IMR-90 (cell line): ENCODE measurements at regions of chr20 and their contacts with region 1.

Region 1: GRCh38 chr20:35269055-35269781 is 8.7 kb downstream of the MMP24OS start:
- DNase-seq: peak; percentile 62
- ATAC-seq: peak; percentile 84
- H3K4me3 ChIP-seq: no peak overlapping the region
- H3K27ac ChIP-seq: no peak overlapping the region
- H3K4me1 ChIP-seq: no peaks in the 10 kb centered on the region
- H3K27me3 ChIP-seq: no peaks in the 10 kb centered on the region
- CTCF ChIP-seq: peak; percentile 79
- POLR2A ChIP-seq: no peak
- RAD21 ChIP-seq: peak; percentile 89

Region 2: GRCh38 chr20:34834459-34834893 is 434.7 kb before region 1 on chr20:
- CTCF ChIA-PET with region 1: no interaction called
- POLR2A ChIA-PET with region 1: no interaction called
- dilution Hi-C with region 1: no loop called
- in situ Hi-C with region 1: no loop called
- intact Hi-C with region 1: loop called (anchors 1 kb)
- DNase-seq: peak; percentile 45
- ATAC-seq: peak; percentile 80
- H3K4me3 ChIP-seq: no peak overlapping the region
- H3K27ac ChIP-seq: no peak overlapping the region
- H3K4me1 ChIP-seq: no peaks in the 10 kb centered on the region; the same call in 1 of the 2 replicates
- H3K27me3 ChIP-seq: peaks cover 15% of the 10 kb centered on the region
- CTCF ChIP-seq: peak; percentile 45
- POLR2A ChIP-seq: no peak
- RAD21 ChIP-seq: peak; percentile 60

Region 3: DNA sequence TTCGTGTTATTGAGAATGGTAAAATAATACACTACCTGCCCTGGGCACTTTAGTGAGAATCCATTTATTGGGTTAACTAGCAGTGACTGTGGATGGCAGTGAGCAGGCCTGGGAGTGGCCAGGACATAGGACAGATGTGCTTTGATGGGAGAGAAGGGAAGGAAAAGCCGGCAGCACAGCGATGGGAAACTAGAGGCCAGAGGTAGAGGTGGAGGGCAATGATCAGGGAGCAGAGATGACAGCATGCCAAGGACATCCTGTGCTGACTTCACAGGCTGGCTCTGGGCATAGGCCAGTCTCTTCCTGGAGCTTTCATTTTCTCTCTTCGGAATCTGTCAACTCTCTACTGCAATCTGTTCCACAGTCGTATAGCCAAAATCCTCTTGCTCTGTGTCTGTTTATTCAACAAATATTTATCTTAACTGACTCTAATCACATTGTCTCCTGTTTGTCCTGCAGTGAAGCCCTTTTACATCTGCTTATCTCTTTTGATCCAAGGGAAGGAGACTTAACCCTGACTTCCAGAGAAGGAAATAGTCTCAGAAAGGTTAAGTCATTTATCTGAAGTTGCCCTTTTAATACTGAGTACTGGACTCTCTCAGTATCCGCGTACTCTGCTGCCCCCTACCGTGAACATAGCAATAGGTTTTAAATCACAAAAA is 61.1 kb before region 1 on chr20:
- CTCF ChIA-PET with region 1: no interaction called
- POLR2A ChIA-PET with region 1: no interaction called
- dilution Hi-C with region 1: no loop called
- in situ Hi-C with region 1: no loop called
- intact Hi-C with region 1: loop called (anchors 2 kb)
- DNase-seq: peak; percentile 78
- ATAC-seq: peak; percentile 98
- H3K4me3 ChIP-seq: no peak overlapping the region
- H3K27ac ChIP-seq: peak overlapping the region; percentile 39
- H3K4me1 ChIP-seq: peaks cover 3% of the 10 kb centered on the region; the same call in 1 of the 2 replicates
- H3K27me3 ChIP-seq: no peaks in the 10 kb centered on the region
- CTCF ChIP-seq: peak; percentile 94
- POLR2A ChIP-seq: 0 out of 2 replicates have a peak, but pooled peaks have one; percentile 32
- RAD21 ChIP-seq: peak; percentile 97